Transverse colon (tissue), 4 donors: ENCODE measurements at regions of chr16 and their contacts with region 1.

Region 1: GRCh38 chr16:30429678-30430427 is at the start of gene DCTPP1:
- DNase-seq: peak; percentile 97
- H3K4me3 ChIP-seq: peak within 1 kb of the TSS; percentile 51 to 70 (median 64)
- H3K27ac ChIP-seq: peak within 1 kb of the TSS; percentile 88 to 92 (median 90)
- H3K4me1 ChIP-seq: peaks cover 0 to 23% (median 17%) of the 10 kb centered on the region in 4 donors
- H3K27me3 ChIP-seq: no peaks in the 10 kb centered on the region
- CTCF ChIP-seq: peak; percentile 60 to 96 (median 84)
- EP300 ChIP-seq: no peak
- POLR2A ChIP-seq: peak; percentile 48
- total RNA-seq, gene DCTPP1: 35.2 to 74.1 (median 50.0) TPM

Region 2: GRCh38 chr16:30526823-30527635 is 97.2 kb after region 1 on chr16:
- in situ Hi-C with region 1: loop called in 1 of 4 experiments (anchors 10 kb)
- intact Hi-C with region 1: no loop called
- DNase-seq: peak; percentile 99
- H3K4me3 ChIP-seq: peak overlapping the region; percentile 75 to 93 (median 84)
- H3K27ac ChIP-seq: peak overlapping the region; percentile 97 to 99 (median 99)
- H3K4me1 ChIP-seq: peaks cover 14 to 41% (median 20%) of the 10 kb centered on the region in 4 donors
- H3K27me3 ChIP-seq: no peaks in the 10 kb centered on the region
- CTCF ChIP-seq: peak; percentile 24 to 71 (median 34)
- EP300 ChIP-seq: no peak
- POLR2A ChIP-seq: peak; percentile 93

Region 3: GRCh38 chr16:30557957-30558788 is 128.3 kb after region 1 on chr16 and contains the start of gene ZNF764:
- in situ Hi-C with region 1: loop called in 1 of 4 experiments (anchors 25 kb)
- intact Hi-C with region 1: no loop called
- DNase-seq: peak; percentile 99
- H3K4me3 ChIP-seq: peak within 1 kb of the TSS; percentile 59 to 94 (median 73)
- H3K27ac ChIP-seq: peak within 1 kb of the TSS; percentile 91 to 99 (median 96)
- H3K4me1 ChIP-seq: peaks cover 24 to 53% (median 43%) of the 10 kb centered on the region in 4 donors
- H3K27me3 ChIP-seq: no peaks in the 10 kb centered on the region
- CTCF ChIP-seq: peak in 1 of 5 experiments; percentile 6
- EP300 ChIP-seq: no peak
- POLR2A ChIP-seq: peak; percentile 67
- total RNA-seq, gene ZNF764: 17.9 to 48.0 (median 23.2) TPM

Region 4: DNA sequence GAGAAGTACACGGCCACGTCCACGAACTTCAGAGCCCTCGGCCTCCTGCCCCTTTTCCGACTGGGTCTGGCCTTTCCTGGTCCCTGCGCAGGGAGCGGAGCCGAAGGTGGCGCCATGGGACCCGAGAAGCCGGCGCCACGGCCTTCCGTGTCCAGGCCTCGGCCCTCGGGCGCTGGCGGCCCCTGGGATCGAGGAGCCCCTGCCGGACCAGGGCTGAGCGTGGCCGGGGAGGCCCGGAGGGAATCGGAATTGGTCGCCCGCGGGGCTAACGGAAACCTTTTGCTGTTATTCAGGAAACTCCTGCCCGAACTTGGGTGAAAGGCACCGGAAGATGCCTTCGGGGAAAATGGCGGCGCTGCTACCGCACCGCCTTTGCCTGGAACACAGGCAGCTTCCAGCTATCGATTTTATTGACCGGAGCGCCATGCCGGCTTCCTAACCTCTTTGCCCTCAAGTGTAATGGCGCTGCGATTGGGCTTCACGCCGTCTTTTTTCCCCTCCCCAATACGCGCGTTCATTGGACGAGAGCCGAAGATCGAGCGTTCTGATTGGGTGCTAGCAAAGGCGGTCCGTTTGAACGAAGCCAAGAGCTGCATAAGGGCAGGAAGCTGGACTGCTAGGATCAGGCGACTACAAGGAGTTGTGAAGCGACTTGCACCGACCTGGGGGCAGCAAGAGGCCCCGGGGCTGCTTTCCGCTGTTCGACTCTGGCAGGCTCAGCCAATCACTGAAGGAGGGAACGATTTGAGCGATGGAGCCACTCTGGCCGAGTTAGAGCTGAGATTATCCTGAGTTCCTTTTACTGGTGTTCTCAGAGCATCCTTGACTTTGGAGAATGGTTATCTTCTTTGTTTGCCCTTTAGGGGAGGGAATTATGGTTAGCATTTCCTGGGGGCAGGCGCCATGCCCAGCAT is 180.3 kb after region 1 on chr16 and contains the start of gene ZNF689:
- in situ Hi-C with region 1: loop called in 1 of 4 experiments (anchors 10 kb)
- intact Hi-C with region 1: no loop called
- DNase-seq: peak; percentile 96
- H3K4me3 ChIP-seq: peak within 1 kb of the TSS; percentile 71 to 96 (median 89)
- H3K27ac ChIP-seq: peak within 1 kb of the TSS; percentile 94 to 99 (median 98)
- H3K4me1 ChIP-seq: peaks cover 5 to 23% (median 17%) of the 10 kb centered on the region in 4 donors
- H3K27me3 ChIP-seq: no peaks in the 10 kb centered on the region
- CTCF ChIP-seq: peak in 1 of 5 experiments; percentile 8
- EP300 ChIP-seq: no peak
- POLR2A ChIP-seq: peak; percentile 80
- total RNA-seq, gene ZNF689: 3.4 to 77.1 (median 8.1) TPM